Cardiac septum (tissue), 1 donor: ENCODE measurements at regions of chr1 and their contacts with region 1.

Region 1: DNA sequence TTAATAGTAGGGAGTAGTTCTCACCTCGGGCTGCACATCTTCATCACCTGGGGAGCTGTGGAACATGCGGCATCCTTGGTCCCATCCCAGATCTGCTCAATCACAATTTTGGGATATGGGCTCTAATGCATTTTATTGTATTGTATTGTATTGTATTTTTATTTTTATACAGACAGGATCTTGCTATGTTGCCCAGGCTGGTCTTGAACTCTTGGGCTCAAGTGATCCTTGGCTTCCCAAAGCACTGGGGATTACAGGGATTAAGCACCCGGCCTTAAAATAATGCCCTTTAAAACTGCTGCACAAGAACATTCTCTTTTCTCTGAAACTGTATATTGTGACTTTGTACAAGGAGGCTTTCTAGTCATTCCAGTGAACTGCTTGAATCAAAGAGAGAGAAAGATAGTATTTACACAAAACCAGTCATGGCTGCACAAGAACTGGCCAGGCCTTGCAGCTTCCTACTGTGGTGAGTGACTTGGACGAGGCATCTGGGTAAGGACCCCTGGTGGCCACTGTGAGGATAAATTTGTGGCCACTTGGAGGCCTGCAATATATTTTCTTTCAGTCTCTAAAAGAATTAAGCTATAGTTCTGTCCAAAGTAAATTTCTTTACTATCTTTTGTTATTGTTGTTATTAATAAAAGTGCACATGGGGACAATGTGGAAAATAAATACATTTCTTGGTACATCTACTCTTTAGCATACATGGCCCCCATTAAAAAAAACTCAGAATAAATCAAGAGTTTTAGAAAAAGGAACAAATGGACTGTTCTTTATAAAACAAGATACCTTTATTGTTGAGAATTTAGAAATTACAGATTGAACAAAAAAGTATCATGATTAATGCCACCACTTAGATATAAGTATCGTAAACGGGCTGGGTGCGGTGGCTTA is 48.0 kb downstream of the TBCE start:
- DNase-seq: no peak

Region 2: DNA sequence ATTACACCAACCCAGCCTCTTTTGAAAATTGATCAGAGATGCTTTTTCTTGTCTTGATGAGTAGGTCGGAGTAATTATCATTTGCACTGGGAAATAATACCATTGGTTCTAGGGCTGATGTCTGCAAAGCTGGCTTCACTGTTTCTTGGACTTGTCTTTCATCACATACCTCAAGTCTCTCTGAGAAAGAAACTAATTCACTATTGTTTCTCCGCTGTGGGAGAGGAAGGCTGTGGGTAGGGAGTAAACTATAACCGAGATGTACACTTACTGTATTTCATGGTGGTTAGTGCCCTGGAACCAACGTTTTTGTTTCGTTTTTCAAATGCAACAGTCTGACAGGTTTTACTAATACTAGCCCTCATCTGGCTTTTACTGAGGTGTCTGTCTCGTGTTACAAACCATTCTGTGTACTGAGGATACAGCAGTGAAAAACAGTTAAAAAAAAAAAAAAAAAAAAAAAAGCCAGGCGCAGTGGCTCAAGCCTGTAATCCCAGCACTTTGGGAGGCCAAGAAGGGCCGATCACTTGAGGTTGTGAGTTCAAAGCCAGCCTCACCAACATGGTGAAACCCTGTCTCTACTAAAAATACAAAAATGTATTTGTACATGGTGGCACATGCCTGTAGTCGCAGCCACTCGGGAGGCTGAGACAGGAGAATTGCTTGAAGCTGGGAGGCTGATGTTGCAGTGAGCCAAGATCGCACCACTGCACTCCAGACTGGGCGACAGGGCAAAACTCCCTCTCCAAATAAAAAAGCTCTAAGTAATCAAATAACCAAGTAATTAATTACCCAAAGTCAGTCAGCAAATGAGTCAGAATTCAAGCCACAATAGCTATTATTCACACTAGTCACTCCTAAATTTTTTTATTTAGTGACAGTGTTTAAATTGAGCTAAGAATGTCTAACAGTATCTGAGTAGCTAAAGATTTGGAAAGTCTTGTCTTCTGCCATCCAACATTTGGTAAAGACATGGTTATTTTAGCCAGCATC is 309.9 kb before region 1 on chr1:
- intact Hi-C with region 1: loop called (anchors 10 kb)
- DNase-seq: no peak

Region 3: GRCh38 chr1:235253219-235253962 is 161.9 kb before region 1 on chr1:
- intact Hi-C with region 1: loop called (anchors 2 kb)
- DNase-seq: no peak

Region 4: GRCh38 chr1:235328357-235329138 is 86.7 kb before region 1 on chr1 and contains the start of gene GGPS1:
- intact Hi-C with region 1: loop called (anchors 5 kb)
- DNase-seq: peak; percentile 99
- total RNA-seq, gene GGPS1: 36.2 TPM

Region 5: DNA sequence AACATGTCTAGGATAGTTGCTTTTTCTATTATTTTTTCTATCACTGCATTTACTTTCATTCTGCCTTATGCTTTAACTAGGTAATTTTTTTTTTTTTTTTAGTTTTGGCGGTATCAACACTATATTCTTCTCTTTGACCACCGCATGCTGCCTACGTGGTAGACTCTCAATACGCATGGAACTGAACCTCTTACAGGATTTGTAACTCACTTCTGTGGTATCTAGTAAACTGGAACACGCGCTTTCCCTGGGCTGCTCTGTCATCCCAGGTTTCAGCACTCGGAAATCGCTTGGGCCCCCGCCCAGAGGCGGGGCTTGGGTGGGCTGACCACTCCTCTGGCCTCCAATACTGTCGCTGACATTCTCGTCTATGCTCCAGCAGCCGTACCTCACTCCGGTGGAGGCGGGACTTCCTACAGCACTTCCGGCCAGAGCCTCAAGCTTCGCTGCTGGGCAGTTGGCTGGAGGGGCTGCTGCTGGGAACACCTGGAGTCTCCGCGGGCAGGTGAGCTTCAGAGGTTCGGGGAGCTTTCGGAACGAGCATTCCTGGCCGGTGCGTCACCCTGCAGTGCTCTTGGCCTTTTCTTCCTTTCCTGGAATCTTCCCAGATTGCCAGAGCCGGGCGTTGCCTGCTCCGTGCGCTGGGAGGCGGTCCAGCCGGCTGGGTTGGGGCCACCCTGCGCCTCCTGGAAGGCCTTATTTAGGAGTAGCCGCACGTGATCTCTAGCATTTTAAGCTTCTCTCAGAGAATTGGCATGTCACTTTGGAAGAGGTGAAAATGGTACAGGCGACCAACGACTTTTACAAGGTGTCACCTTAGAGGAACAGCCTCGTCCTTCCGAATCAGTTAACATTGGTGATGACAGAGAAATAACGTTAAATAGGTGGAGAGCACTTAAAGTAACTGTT is 48.0 kb before region 1 on chr1 and contains the start of gene TBCE:
- intact Hi-C with region 1: loop called (anchors 10 kb)
- DNase-seq: peak; percentile 98
- total RNA-seq, gene TBCE: 15.2 TPM